Left lung (tissue), 14 donors: ENCODE measurements at regions of chr12 and their contacts with region 1.

Region 1: GRCh38 chr12:123388177-123388947 is 4.4 kb downstream of the KMT5A start:
- DNase-seq: peak; percentile 68 to 93 (median 84)
- ATAC-seq: peak; percentile 58
- H3K4me3 ChIP-seq: peak overlapping the region; percentile 45 to 60
- H3K27ac ChIP-seq: peak overlapping the region; percentile 89 to 93
- H3K4me1 ChIP-seq: peaks cover 31 to 69% of the 10 kb centered on the region in 2 donors
- H3K27me3 ChIP-seq: no peaks in the 10 kb centered on the region
- CTCF ChIP-seq: no peak

Region 2: GRCh38 chr12:123580772-123581171 is 192.4 kb after region 1 on chr12:
- intact Hi-C with region 1: loop called in 1 of 2 experiments (anchors 5 kb)
- DNase-seq: no peak
- ATAC-seq: no peak
- H3K4me3 ChIP-seq: no peak overlapping the region
- H3K27ac ChIP-seq: no peak overlapping the region
- H3K4me1 ChIP-seq: peaks cover 12 to 31% of the 10 kb centered on the region in 2 donors
- H3K27me3 ChIP-seq: no peaks in the 10 kb centered on the region
- CTCF ChIP-seq: no peak

Region 3: DNA sequence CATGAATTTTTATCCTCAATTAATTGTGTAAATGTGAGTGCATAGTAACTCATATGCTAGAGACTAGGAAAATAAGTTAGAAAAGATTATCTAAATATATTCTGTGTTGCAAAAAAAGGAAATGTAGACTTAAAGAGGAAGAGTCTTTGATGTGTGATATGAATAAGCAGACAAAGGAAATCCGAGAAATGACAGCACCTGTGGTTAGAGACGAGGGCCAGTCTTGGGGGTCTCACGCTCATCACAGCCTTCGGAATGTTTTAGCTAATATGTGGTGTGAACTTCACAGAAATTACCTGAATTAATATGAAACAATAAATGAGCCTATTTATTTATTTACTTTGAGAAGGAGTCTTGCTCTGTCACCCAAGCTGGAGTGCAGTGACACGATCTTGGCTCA is 335.4 kb after region 1 on chr12:
- intact Hi-C with region 1: no loop called
- DNase-seq: no peak
- ATAC-seq: no peak
- H3K4me3 ChIP-seq: no peak overlapping the region
- H3K27ac ChIP-seq: no peak overlapping the region
- H3K4me1 ChIP-seq: no peaks in the 10 kb centered on the region
- H3K27me3 ChIP-seq: no peaks in the 10 kb centered on the region
- CTCF ChIP-seq: no peak